GM12878 (cell line): ENCODE measurements at regions of chr6 and their contacts with region 1.

Region 1: GRCh38 chr6:4906293-4907276 is 97.3 kb downstream of the RPP40 start:
- DNase-seq: no peak
- ATAC-seq: peak; percentile 79
- H3K4me3 ChIP-seq: peak overlapping the region; percentile 32; the same call in 1 of the 2 replicates
- H3K27ac ChIP-seq: peak overlapping the region; percentile 82
- H3K4me1 ChIP-seq: peaks cover 51% of the 10 kb centered on the region
- H3K27me3 ChIP-seq: no peaks in the 10 kb centered on the region
- CTCF ChIP-seq: no peak
- EP300 ChIP-seq: no peak
- POLR2A ChIP-seq: 0 out of 2 replicates have a peak, but pooled peaks have one; percentile 21
- RAD21 ChIP-seq: no peak

Region 2: DNA sequence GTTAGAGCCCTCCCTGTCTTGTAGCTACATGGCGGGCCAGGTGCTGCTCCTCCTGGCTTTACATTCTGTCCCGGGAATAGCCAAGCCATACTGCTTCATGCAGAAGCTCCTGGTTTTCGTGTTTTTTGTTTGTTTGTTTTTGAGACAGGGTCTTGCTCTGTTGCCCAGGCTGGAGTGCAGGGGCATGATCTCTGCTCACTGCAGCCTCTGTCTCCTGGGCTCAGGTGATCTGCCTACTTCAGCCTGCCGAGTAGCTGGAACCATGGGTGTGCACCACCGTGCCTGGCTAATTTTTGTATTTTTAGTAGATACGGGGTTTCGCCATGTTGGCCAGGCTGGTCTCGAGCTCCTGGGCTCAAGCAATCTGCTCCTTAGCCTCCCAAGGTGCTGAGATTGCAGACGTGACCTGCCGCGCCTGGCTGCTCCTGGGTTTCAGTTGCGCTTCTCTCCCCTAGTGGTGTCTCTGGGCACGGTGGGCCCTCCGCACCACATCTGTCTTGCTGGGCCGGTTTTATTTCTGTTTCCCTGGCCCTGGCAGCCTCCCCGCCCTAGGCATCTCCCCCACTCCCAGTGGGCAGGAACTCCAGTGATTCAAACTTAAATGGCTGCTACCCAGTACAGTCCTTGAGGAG is 117.5 kb before region 1 on chr6:
- CTCF ChIA-PET with region 1: interaction called, 3 read pairs
- POLR2A ChIA-PET with region 1: no interaction called
- RAD21 ChIA-PET with region 1: interaction called, 11 read pairs
- SMC1A ChIA-PET with region 1: interaction called, 9 read pairs
- in situ Hi-C with region 1: no loop called
- intact Hi-C with region 1: no loop called
- DNase-seq: no peak
- ATAC-seq: peak; percentile 97
- H3K4me3 ChIP-seq: peak overlapping the region; percentile 53; the same call in 1 of the 2 replicates
- H3K27ac ChIP-seq: peak overlapping the region; percentile 42
- H3K4me1 ChIP-seq: peaks cover 27% of the 10 kb centered on the region
- H3K27me3 ChIP-seq: no peaks in the 10 kb centered on the region
- CTCF ChIP-seq: peak; percentile 39 to 69 (median 43)
- EP300 ChIP-seq: no peak
- POLR2A ChIP-seq: no peak
- RAD21 ChIP-seq: peak; percentile 21; the same call in 1 of the 2 replicates

Region 3: DNA sequence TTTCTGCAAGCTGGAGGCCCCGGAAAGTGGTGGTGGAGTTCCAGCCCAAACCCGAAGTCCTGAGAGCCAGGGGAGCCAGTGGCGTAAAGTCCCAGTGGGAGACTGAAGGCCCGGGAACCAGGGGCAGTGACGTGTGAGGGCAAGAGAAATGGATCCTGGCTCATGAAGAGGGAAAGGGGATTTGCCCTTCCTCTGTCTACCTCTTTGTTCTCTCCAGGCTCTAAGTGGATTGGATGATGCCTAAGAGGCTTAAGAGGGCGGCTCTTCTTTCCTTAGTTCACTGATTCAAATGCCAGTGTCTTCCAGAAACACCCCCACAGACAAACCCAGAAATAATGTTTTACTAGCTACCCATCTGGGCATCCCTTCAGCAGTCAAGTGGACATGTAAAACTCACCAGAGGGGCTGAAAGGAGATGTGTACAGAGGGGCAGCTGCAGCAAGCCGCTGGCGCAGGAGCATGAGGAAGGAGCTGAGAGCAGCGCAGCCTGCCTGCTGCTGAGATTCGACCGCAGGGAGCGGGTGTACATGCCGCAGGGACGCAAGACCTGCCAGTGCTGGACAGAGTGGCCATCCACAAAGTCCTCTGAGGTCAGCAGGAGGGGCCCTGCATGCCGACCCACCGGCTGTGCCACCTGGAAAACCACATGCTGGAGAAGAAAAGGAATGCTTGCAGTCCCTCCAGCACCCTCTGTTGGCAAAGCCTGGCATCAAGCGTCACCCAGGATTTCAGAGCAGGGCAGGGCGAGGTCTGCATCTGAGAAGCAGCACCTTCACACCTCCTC is 100.8 kb before region 1 on chr6:
- CTCF ChIA-PET with region 1: interaction called, 12 read pairs
- POLR2A ChIA-PET with region 1: interaction called, 3 read pairs
- RAD21 ChIA-PET with region 1: interaction called, 9 read pairs
- SMC1A ChIA-PET with region 1: interaction called, 19 read pairs
- in situ Hi-C with region 1: no loop called
- intact Hi-C with region 1: no loop called
- DNase-seq: no peak
- ATAC-seq: no peak
- H3K4me3 ChIP-seq: no peak overlapping the region
- H3K27ac ChIP-seq: no peak overlapping the region
- H3K4me1 ChIP-seq: peaks cover 46% of the 10 kb centered on the region
- H3K27me3 ChIP-seq: no peaks in the 10 kb centered on the region
- CTCF ChIP-seq: peak; percentile 48 to 70 (median 57); a peak in 5 of 6 replicates
- EP300 ChIP-seq: no peak
- POLR2A ChIP-seq: no peak
- RAD21 ChIP-seq: peak; percentile 48; the same call in 1 of the 2 replicates

Region 4: GRCh38 chr6:4896401-4896800 is 10.2 kb before region 1 on chr6:
- CTCF ChIA-PET with region 1: interaction called, 4 read pairs
- POLR2A ChIA-PET with region 1: interaction called, 3 read pairs
- RAD21 ChIA-PET with region 1: no interaction called
- SMC1A ChIA-PET with region 1: interaction called, 10 read pairs
- in situ Hi-C with region 1: no loop called
- intact Hi-C with region 1: no loop called
- DNase-seq: no peak
- ATAC-seq: no peak
- H3K4me3 ChIP-seq: no peak overlapping the region
- H3K27ac ChIP-seq: no peak overlapping the region
- H3K4me1 ChIP-seq: peaks cover 7% of the 10 kb centered on the region
- H3K27me3 ChIP-seq: no peaks in the 10 kb centered on the region
- CTCF ChIP-seq: no peak
- EP300 ChIP-seq: no peak
- POLR2A ChIP-seq: no peak
- RAD21 ChIP-seq: no peak

Region 5: DNA sequence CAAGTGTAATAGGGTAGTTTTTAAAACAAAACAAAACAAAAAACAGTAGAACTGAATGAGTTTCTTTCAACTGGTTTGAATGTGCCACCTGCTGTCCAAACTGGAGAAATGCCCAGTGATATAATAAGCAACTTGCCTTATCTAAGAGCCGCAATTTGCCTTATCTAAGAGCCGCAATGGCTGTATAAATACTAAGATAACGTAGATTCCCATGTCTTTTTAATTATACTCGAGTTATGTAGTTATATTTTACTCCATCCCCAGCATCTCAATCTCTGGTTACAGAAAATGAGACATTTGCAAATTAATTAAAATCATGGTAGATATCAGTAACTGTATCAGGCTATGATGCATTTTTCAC is 30.1 kb after region 1 on chr6:
- CTCF ChIA-PET with region 1: interaction called, 10 read pairs
- POLR2A ChIA-PET with region 1: no interaction called
- RAD21 ChIA-PET with region 1: interaction called, 4 read pairs
- SMC1A ChIA-PET with region 1: interaction called, 5 read pairs
- in situ Hi-C with region 1: no loop called
- intact Hi-C with region 1: no loop called
- DNase-seq: no peak
- ATAC-seq: peak; percentile 67
- H3K4me3 ChIP-seq: no peak overlapping the region
- H3K27ac ChIP-seq: no peak overlapping the region
- H3K4me1 ChIP-seq: peaks cover 12% of the 10 kb centered on the region
- H3K27me3 ChIP-seq: no peaks in the 10 kb centered on the region
- CTCF ChIP-seq: peak; percentile 48 to 70 (median 70); a peak in 5 of 6 replicates
- EP300 ChIP-seq: no peak
- POLR2A ChIP-seq: no peak
- RAD21 ChIP-seq: peak; percentile 80

Region 6: GRCh38 chr6:4973982-4974745 is 67.6 kb after region 1 on chr6:
- CTCF ChIA-PET with region 1: no interaction called
- POLR2A ChIA-PET with region 1: no interaction called
- RAD21 ChIA-PET with region 1: no interaction called
- SMC1A ChIA-PET with region 1: no interaction called
- in situ Hi-C with region 1: no loop called
- intact Hi-C with region 1: no loop called
- DNase-seq: no peak
- ATAC-seq: no peak
- H3K4me3 ChIP-seq: no peak overlapping the region
- H3K27ac ChIP-seq: no peak overlapping the region
- H3K4me1 ChIP-seq: no peaks in the 10 kb centered on the region
- H3K27me3 ChIP-seq: peaks cover 0 to 2% of the 10 kb centered on the region in 2 experiments; a peak in 1 of 4 replicates
- CTCF ChIP-seq: no peak
- EP300 ChIP-seq: no peak
- POLR2A ChIP-seq: no peak
- RAD21 ChIP-seq: no peak

Region 7: DNA sequence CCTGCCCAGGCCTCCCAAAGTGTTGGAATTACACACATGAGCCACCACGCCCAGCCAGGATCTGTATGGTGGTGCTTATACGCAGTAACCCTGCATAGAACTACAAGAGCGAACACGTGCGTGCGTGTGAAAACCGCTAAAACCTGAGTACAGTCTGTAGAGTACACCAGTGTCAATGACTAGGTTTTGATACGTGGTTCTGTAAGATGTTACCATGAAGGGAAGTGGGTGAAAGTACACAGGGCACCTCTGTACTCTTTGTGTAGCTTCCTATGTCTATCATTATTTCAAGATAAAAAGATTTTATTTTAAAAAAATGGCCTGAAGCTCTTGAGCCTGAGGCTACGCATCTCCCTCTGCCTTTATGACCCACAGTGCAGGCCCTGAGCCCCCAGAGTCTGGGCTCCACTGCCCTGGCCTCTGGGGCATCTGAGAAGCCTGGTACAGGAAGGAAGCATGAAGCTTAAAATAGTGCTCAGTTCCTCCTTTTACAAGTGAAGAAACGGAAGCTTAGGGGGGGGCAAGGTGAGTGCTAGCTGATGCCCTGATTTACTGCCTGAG is 1703.5 kb after region 1 on chr6:
- CTCF ChIA-PET with region 1: no interaction called
- POLR2A ChIA-PET with region 1: no interaction called
- RAD21 ChIA-PET with region 1: no interaction called
- SMC1A ChIA-PET with region 1: no interaction called
- in situ Hi-C with region 1: no loop called
- intact Hi-C with region 1: no loop called
- DNase-seq: peak; percentile 71
- ATAC-seq: peak; percentile 97
- H3K4me3 ChIP-seq: peak overlapping the region; percentile 39; the same call in 1 of the 2 replicates
- H3K27ac ChIP-seq: peak overlapping the region; percentile 77
- H3K4me1 ChIP-seq: peaks cover 21% of the 10 kb centered on the region
- H3K27me3 ChIP-seq: no peaks in the 10 kb centered on the region
- CTCF ChIP-seq: no peak
- EP300 ChIP-seq: no peak
- POLR2A ChIP-seq: no peak
- RAD21 ChIP-seq: no peak